ENCODE measurements at regions of chr19 and their contacts with region 1.

Region 1: DNA sequence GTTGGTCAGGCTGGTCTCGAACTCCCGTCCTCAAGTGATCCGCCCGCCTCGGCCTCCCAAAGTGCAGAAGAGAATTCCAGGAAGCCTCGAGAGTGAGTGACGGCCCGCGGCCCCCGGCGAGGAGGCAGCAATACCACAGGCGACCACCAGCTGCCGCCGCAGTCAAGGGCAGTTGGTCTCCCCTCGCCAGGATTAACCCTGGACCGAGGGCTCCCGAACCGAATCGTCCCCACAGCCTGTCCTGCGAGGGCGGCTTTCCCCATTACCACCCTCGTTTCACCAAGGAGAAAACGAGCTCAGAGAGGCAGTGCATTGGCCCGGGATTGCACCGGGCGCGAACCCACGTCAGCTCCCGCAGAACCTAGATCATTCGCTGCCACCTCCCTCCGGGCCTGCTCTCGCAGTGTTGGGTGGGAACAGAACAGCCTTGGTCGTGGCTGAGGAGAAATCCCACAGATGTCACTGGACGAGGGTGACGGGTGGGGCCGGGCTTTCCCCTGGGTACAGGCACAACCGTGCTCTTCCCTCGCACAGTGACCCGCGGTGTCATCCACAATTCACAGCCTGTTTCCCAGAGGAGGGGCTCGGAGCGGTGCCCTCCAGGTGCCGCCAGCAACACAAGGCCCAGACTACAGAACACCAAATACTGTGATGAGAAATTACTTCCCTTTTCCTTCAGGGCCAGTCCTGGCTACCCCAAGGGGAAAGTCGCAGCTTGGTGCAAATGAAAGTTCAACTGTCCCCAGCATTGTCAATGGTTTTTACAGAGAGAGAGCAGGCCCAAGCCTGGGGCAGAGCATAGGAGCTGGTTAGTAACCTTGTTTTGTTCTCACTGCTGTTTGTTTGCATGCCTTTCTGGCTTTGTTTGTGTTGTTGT is 24.8 kb downstream of the C2CD4C start:
- DNase-seq: peak; percentile 83
- ATAC-seq: peak; percentile 98
- H3K4me3 Mint-ChIP-seq: no peak overlapping the region
- H3K27ac Mint-ChIP-seq: no peak overlapping the region
- H3K4me1 Mint-ChIP-seq: peaks cover 28% of the 10 kb centered on the region
- H3K27me3 Mint-ChIP-seq: peaks cover 17% of the 10 kb centered on the region
- CTCF ChIP-seq: peak; percentile 68

Region 2: GRCh38 chr19:426725-427445 is 42.7 kb after region 1 on chr19:
- CTCF ChIA-PET with region 1: no interaction called
- POLR2A ChIA-PET with region 1: no interaction called
- DNase-seq: no peak
- ATAC-seq: no peak; the same call in 1 of the 2 replicates
- H3K4me3 Mint-ChIP-seq: no peak overlapping the region
- H3K27ac Mint-ChIP-seq: no peak overlapping the region
- H3K4me1 Mint-ChIP-seq: no peaks in the 10 kb centered on the region
- H3K27me3 Mint-ChIP-seq: peaks cover 3% of the 10 kb centered on the region; the same call in 1 of the 2 replicates
- CTCF ChIP-seq: no peak

Region 3: DNA sequence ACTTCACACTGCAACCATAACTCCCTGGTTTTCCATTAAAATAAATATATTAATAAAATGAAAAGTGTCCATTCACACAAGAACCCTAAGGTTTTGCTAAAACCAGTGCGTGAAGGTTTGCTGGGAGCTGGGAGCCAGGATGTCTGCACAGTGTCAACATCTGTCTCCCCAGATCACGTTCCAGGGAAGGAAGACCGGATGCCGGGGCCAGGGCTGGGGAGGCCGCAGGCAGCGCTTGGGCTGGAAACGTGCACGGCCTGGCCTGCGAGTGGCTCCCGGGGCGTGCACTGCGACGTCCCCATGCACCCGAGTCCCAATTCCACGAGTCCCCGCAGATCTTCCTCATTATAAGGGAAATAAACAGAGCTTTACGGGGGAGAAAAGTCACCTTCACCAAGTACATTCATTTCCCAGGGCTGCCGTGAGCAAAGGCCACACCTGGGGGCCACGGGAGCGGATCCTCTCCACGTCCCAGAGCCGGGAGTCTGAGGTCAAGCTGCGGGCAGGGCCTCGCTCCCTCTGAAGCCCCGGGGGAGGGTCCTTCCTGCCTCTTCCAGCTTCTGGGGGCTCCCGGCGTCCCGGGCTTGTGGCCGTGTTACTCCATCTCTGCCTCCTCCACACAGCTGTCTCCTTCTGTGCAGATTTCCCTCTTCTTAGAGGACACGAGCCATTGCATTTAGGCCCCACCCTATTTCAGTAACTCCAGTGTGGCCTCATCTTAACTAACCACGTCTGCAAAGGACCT is 63.8 kb after region 1 on chr19:
- CTCF ChIA-PET with region 1: no interaction called
- POLR2A ChIA-PET with region 1: no interaction called
- DNase-seq: no peak
- ATAC-seq: no peak
- H3K4me3 Mint-ChIP-seq: no peak overlapping the region
- H3K27ac Mint-ChIP-seq: no peak overlapping the region
- H3K4me1 Mint-ChIP-seq: no peaks in the 10 kb centered on the region
- H3K27me3 Mint-ChIP-seq: peaks cover 3% of the 10 kb centered on the region; the same call in 1 of the 2 replicates
- CTCF ChIP-seq: no peak

Region 4: GRCh38 chr19:472005-472858 is 88.1 kb after region 1 on chr19:
- CTCF ChIA-PET with region 1: no interaction called
- POLR2A ChIA-PET with region 1: no interaction called
- DNase-seq: no peak
- ATAC-seq: no peak
- H3K4me3 Mint-ChIP-seq: no peak overlapping the region
- H3K27ac Mint-ChIP-seq: no peak overlapping the region
- H3K4me1 Mint-ChIP-seq: no peaks in the 10 kb centered on the region
- H3K27me3 Mint-ChIP-seq: no peaks in the 10 kb centered on the region
- CTCF ChIP-seq: no peak

Region 5: DNA sequence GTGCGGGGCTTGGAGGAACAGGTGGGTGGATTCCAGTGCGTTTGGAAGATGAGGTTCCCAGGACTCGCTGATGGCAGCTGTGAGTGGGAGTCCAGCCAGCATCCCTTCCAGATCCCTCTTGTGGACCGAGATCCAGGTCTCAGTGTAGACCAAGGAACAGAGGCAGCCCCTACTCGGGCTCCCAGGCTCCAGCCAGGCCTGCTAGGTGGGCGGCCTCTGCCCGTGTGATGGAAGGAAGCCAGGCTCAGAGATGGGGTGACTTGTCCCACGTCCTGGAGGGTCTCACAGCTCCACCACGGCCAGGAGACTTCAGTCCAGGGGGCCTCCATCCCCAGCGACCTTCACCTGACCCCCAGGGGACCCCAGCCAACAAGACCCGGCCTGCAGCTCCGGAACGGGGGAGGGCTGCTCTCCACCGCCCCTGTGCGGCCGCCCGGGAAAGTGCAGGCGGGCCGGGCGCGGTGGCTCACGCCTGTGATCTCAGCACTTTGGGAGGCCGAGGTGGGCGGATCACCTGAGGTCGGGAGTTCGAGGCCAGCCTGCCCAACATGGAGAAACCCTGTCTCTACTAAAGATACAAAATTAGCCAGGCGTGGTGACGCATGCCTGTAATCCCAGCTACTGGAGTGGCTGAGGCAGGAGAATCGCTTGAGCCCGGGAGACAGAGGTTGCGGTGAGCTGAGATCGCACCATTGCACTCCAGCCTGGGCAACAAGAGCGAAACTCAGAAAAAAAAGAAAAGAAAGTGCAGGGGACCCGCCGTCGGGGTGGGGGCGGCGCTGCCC is 111.4 kb after region 1 on chr19:
- CTCF ChIA-PET with region 1: interaction called, 10 read pairs
- POLR2A ChIA-PET with region 1: no interaction called
- DNase-seq: peak; percentile 82
- ATAC-seq: peak; percentile 55
- H3K4me3 Mint-ChIP-seq: peak overlapping the region; percentile 64
- H3K27ac Mint-ChIP-seq: no peak overlapping the region
- H3K4me1 Mint-ChIP-seq: peaks cover 8% of the 10 kb centered on the region
- H3K27me3 Mint-ChIP-seq: peaks cover 33% of the 10 kb centered on the region
- CTCF ChIP-seq: peak; percentile 98

Region 6: DNA sequence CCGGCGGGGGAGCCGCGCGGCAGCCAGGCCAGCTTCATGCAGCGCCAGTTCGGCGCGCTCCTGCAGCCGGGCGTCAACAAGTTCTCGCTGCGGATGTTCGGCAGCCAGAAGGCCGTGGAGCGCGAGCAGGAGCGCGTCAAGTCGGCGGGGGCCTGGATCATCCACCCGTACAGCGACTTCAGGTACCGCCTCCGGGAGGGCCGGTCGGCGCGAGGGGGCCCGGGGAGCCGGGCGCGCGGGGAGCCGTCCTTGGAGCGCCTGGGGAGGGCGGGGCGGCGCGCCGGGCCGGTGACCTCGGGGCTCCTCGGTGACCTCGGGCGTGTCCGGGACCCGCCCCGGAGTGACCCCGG is 206.2 kb after region 1 on chr19:
- CTCF ChIA-PET with region 1: no interaction called
- POLR2A ChIA-PET with region 1: no interaction called
- DNase-seq: no peak
- ATAC-seq: no peak; the same call in 1 of the 2 replicates
- H3K4me3 Mint-ChIP-seq: peak overlapping the region; percentile 57
- H3K27ac Mint-ChIP-seq: no peak overlapping the region
- H3K4me1 Mint-ChIP-seq: no peaks in the 10 kb centered on the region
- H3K27me3 Mint-ChIP-seq: peaks cover 43% of the 10 kb centered on the region
- CTCF ChIP-seq: no peak

Measured in WTC11 (cell line).